ENCODE measurements at regions of chr12 and their contacts with region 1.

Region 1: DNA sequence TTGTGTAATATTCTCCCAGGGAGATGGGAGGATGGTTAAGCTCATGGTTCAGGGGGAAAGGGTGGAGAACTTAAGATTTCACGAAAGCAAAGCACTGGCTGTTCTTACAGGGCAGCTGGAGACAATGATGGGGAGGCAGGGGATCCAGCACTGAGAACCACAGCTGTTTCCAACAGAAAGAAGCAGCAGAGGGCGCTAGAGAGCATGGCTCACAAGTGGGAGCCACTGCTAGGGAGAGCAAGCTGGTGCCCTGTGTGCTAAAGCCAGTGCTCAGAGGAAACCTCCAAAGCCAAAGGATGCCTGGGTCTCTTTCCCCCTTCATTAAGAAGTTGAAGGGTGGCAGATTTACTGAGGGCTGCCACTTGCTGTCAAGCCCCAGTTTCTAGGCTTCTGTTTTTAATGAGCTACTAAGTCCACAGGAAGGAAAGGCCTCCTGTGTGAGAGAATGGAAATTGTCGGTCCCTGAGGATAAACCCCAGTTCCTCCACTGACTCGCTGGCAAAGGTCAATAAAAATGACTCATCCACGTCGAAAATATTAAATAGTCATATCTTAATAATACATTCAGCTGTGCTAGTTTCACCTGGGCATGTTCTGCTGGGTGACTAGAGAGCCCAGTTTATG is 199.7 kb downstream of the ANO2 start:
- DNase-seq: peak; percentile 73
- ATAC-seq: peak; percentile 69 to 94

Region 2: DNA sequence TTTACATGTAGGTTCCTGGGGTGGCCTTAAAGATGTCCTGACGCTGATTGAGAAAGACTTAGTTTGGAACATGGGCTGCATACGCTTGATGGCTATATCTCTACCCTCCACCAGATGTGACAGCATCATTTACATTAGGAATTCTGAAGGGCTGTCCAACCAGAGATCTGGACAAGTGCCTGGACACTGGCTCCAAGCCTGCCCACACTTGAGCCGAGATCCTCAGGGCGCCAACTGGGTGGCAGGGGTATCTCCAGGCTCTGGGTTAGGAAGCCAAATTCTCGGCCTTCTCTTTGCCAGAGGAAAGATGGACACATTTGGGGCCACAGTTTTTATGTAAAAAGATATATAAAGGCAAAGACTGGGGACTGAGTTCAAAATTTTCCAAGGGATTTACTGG is 67.2 kb before region 1 on chr12:
- intact Hi-C with region 1: no loop called
- DNase-seq: no peak
- ATAC-seq: peak in 1 of 2 donors; percentile 57

Region 3: DNA sequence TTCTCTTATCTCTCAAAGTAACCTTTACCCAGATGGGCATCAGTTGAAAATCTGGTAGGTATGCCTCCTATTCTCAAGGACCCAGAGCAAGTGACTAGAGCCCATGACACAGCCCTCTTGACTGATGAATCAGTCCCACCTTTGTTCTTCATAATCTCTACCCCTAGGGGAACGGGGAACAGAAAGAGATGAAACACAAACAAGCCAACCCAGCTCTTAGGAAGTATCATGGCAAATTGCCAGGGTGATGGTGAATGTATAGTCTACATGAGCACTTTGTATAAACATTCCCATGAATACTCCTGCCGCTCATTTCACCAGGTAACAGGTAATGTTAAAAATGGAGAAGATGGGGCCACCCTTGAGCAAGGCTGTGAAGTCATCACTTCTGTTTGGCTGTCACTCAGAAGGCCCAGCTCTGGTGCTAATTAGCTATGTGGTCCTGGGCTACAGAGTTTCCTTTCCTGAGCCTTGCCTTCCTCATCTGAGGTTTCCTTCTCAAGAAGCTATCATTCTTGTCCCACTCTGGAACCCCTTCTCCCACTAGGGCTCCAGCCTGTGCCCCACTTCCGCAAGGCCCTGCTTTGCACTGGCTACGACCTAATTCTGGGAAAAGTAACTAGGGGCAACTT is 38.0 kb after region 1 on chr12:
- intact Hi-C with region 1: loop called in 1 of 2 experiments (anchors 5 kb)
- DNase-seq: no peak
- ATAC-seq: no peak